Prostate gland (tissue), 2 donors: ENCODE measurements at regions of chr5 and their contacts with region 1.

Region 1: DNA sequence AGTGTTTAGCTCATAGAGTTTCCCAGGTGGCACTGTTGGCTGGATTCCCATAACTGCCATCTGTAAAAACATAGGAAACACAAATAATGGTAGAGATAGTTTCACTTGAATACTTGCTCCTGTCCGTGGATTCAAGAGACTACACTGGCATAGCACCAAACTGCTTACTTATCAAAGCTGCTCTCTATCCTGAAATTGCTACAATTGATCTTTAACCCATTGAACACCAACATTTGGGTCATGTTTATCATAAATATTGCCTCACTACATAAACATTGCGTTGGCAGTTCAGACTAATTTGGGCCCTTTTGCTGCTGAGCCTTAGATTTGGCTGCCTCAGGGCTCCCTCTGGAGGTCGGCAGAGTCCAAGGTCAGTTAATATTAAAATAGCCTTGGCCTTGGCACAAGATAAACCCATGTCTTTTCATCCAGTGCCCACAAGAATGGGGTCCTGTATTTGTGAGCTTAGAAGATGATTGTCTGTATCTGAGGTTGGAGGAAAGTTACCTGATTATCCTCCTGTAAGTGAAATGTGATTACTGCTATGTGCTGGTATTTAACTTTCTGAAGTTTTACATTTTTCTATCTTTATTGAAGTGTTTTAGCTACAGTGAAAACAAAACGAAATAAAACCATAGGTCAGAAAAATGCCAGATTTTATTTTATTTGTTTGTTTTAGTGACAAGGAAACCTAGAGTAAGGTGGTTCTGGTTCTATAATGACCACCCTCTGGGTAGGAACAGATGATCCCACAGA is 4.0 kb upstream of the RANBP3L start:
- DNase-seq: peak; percentile 37
- H3K4me3 ChIP-seq: no peak overlapping the region
- H3K27ac ChIP-seq: peak overlapping the region in 1 of 2 donors; percentile 37
- H3K4me1 ChIP-seq: no peaks in the 10 kb centered on the region
- H3K27me3 ChIP-seq: no peaks in the 10 kb centered on the region
- CTCF ChIP-seq: peak; percentile 54 to 77 (median 68)
- POLR2A ChIP-seq: no peak

Region 2: GRCh38 chr5:35587419-35587818 is 718.3 kb before region 1 on chr5:
- intact Hi-C with region 1: no loop called
- DNase-seq: no peak
- H3K4me3 ChIP-seq: no peak overlapping the region
- H3K27ac ChIP-seq: no peak overlapping the region
- H3K4me1 ChIP-seq: no peaks in the 10 kb centered on the region
- H3K27me3 ChIP-seq: no peaks in the 10 kb centered on the region
- CTCF ChIP-seq: no peak
- POLR2A ChIP-seq: no peak

Region 3: GRCh38 chr5:36177715-36178523 is 127.8 kb before region 1 on chr5:
- intact Hi-C with region 1: loop called (anchors 5 kb)
- DNase-seq: no peak
- H3K4me3 ChIP-seq: no peak overlapping the region
- H3K27ac ChIP-seq: no peak overlapping the region
- H3K4me1 ChIP-seq: peaks cover 4% of the 10 kb centered on the region
- H3K27me3 ChIP-seq: no peaks in the 10 kb centered on the region
- CTCF ChIP-seq: peak in 3 of 4 experiments; percentile 53 to 58 (median 54)
- POLR2A ChIP-seq: no peak

Region 4: GRCh38 chr5:36241631-36242533 is 63.9 kb before region 1 on chr5 and contains the start of gene NADK2:
- intact Hi-C with region 1: loop called (anchors 2 kb)
- DNase-seq: peak; percentile 95
- H3K4me3 ChIP-seq: peak within 1 kb of the TSS; percentile 77 to 81
- H3K27ac ChIP-seq: peak within 1 kb of the TSS; percentile 96 to 98
- H3K4me1 ChIP-seq: peaks cover 6% of the 10 kb centered on the region
- H3K27me3 ChIP-seq: no peaks in the 10 kb centered on the region
- CTCF ChIP-seq: peak in 3 of 4 experiments; percentile 69 to 85 (median 78)
- POLR2A ChIP-seq: peak; percentile 89
- total RNA-seq, gene NADK2: 21.6 to 37.9 TPM

Region 5: GRCh38 chr5:36269479-36270219 is 36.1 kb before region 1 on chr5:
- intact Hi-C with region 1: loop called (anchors 5 kb)
- DNase-seq: no peak
- H3K4me3 ChIP-seq: no peak overlapping the region
- H3K27ac ChIP-seq: no peak overlapping the region
- H3K4me1 ChIP-seq: no peaks in the 10 kb centered on the region
- H3K27me3 ChIP-seq: no peaks in the 10 kb centered on the region
- CTCF ChIP-seq: no peak
- POLR2A ChIP-seq: no peak

Region 6: DNA sequence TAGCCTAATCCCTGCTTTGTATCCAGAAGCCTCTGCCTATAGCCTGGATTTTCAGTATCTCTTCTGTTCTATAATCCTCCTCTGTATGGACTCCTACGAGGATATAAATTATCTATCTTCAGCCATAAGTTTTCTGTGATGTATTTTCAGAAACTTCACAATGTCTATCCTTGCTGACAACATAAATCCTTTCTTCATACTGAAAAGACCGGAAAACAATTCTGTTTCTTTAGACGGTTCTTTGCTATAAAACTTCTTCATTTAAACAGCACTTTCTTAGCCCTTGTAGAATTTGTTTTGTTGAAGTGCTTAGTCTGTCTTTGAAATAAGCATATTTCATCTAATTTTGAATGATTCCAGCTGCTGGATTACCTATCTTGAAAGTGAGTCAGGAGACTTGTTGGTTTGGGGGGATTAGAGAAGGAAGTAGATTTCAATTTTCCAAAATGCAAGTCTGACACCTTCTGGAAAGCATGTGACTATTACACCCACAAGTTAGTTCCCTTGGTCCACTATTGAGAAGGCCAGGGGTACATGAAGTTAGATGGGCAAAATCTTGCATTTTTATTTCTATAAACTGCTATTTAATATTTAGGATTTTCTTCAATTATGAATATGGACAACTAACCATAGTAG is 92.3 kb after region 1 on chr5:
- intact Hi-C with region 1: loop called (anchors 5 kb)
- DNase-seq: no peak
- H3K4me3 ChIP-seq: no peak overlapping the region
- H3K27ac ChIP-seq: peak overlapping the region in 1 of 2 donors; percentile 9
- H3K4me1 ChIP-seq: no peaks in the 10 kb centered on the region
- H3K27me3 ChIP-seq: no peaks in the 10 kb centered on the region
- CTCF ChIP-seq: peak in 3 of 4 experiments; percentile 25 to 57 (median 41)
- POLR2A ChIP-seq: no peak